MCF 10A (cell line): ENCODE measurements at regions of chr22 and their contacts with region 1.

Region 1: GRCh38 chr22:20981787-20982562 is at the start of gene LZTR1:
- DNase-seq: peak; percentile 79
- H3K4me3 Mint-ChIP-seq: peak within 1 kb of the TSS; percentile 88
- H3K27ac Mint-ChIP-seq: peak within 1 kb of the TSS; percentile 37
- H3K4me1 Mint-ChIP-seq: peaks cover 8% of the 10 kb centered on the region
- H3K27me3 Mint-ChIP-seq: no peaks in the 10 kb centered on the region
- CTCF ChIP-seq: peak; percentile 29
- total RNA-seq, gene LZTR1: 49.2 and 57.3 TPM in 2 replicates

Region 2: DNA sequence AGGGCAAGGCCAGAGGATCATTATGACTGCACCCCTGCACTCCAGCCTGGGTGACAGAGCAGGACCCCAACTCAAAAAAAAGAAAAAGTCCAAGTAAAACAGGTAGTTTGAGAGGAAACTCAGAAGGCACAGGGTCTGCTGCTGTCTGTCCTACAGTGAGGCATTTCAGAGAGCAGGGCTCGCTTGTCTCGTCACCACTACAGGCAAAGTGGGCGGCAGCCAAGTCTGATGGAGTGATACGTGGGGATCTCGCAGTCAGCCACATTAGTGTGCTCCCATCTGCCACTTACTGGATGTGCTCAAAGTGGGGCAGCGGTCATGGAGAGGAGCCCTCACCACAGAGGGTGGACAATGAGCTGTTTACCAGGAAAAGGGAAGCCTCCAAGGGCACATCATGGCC is 165.4 kb before region 1 on chr22:
- CTCF ChIA-PET with region 1: no interaction called
- POLR2A ChIA-PET with region 1: no interaction called
- intact Hi-C with region 1: no loop called
- DNase-seq: no peak
- H3K4me3 Mint-ChIP-seq: no peak overlapping the region
- H3K27ac Mint-ChIP-seq: no peak overlapping the region
- H3K4me1 Mint-ChIP-seq: no peaks in the 10 kb centered on the region
- H3K27me3 Mint-ChIP-seq: no peaks in the 10 kb centered on the region
- CTCF ChIP-seq: no peak

Region 3: DNA sequence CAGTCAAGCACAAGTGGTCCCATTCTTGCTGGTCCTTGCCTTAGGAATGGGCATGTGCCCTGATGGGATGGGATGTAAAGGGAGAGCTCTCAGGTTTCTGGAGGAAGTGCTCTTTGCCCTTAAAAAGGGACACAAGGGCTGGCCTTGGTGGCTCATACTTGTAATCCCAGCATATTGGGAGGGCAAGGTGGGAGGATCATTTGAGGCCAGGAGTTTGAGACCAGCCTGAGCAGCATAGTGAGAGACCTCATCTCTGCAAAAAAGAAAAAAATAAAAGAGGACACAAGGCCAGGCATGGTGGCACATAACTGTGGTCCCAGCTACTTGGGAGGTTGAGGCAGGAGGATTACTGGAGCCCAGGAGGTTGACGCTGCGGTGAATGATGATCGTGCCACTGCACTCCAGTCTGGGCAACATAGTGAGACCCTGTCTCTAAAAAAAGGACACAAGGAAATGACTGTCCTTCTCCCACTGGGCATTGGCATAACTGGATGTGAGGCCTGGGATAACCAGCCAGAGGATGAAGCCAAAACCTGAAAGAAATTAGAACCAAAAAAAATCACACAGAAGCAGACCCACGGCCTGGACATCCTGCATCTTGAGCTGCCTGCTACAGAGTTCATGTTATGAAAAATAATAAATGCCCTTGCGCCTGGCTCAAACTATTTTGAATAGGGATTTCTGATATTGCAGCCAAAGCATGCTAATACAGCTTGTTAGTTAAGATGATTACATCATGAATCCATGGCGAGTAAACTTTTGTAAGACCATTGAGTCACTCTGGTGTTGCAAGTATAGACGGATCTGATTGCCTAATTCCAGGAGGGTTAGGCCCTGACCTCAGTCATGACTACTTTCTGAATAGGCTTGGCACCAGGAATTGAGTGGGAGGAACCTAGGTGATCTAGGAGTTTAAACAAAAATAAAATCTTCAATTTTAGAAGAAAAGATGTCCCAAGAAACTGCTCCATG is 77.7 kb before region 1 on chr22:
- CTCF ChIA-PET with region 1: interaction called, 3 read pairs
- POLR2A ChIA-PET with region 1: interaction called, 15 read pairs
- intact Hi-C with region 1: no loop called
- DNase-seq: peak; percentile 98
- H3K4me3 Mint-ChIP-seq: peak overlapping the region; percentile 52
- H3K27ac Mint-ChIP-seq: peak overlapping the region; percentile 95
- H3K4me1 Mint-ChIP-seq: peaks cover 15% of the 10 kb centered on the region
- H3K27me3 Mint-ChIP-seq: no peaks in the 10 kb centered on the region
- CTCF ChIP-seq: no peak